ENCODE measurements at regions of chr14 and their contacts with region 1.

Region 1: GRCh38 chr14:21014761-21015190 is 10.1 kb downstream of the NDRG2 start:
- DNase-seq: peak; percentile 85
- H3K4me3 Mint-ChIP-seq: no peak overlapping the region
- H3K27ac Mint-ChIP-seq: no peak overlapping the region
- H3K4me1 Mint-ChIP-seq: no peaks in the 10 kb centered on the region
- H3K27me3 Mint-ChIP-seq: peaks cover 2% of the 10 kb centered on the region

Region 2: DNA sequence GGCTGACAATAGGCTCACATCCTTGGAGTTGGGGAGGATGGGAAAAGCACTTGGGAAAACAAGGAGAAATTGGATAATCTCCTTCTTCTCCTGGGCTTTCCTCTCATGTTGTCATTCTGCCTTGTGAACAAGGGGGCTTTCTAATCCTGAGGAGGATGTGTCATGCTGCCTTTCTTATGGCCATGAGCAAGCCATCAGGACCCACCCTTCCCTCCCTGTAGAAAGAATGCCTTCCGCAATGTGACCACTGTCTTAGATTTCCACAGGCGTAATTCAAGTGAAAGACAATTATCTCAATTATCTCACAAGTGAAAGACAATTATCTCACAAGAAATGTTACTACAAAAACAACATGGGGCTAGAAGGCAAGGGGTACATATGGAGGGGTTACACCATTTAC is 370.3 kb before region 1 on chr14:
- CTCF ChIA-PET with region 1: no interaction called
- POLR2A ChIA-PET with region 1: no interaction called
- intact Hi-C with region 1: no loop called
- DNase-seq: no peak
- H3K4me3 Mint-ChIP-seq: no peak overlapping the region
- H3K27ac Mint-ChIP-seq: no peak overlapping the region
- H3K4me1 Mint-ChIP-seq: no peaks in the 10 kb centered on the region
- H3K27me3 Mint-ChIP-seq: peaks cover 11% of the 10 kb centered on the region

Region 3: DNA sequence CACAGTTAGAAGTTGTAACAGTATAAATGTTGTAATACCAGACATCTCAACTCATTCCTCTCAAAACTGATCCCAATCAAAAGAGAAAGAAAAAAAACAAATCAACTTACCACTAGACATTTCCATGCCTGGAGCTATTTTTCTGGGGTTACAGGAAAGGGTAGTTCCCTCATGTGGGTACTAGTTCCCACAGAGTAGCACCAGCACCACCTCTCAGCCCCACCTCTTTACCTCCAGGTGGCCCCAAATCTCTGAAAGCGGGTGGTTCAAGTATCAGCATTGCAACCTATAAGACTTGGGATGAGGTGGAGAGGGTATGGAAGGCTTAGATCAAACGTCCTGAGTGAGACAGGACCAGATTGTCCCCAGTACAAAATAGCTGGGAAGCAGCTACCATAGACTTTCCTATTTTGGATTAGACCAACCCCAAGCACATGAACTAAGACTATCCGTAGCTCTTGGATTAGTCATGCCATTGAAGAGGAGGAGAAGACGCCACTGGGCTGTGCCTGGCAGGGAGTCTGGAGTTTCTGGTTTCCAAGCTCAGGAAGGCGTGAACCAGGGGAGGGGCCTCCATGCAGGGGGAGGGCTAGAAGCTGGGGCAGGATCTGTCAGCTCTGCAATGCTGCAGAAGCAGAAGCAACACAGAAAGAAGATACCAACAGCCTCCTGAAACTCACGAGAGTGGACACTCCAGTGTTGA is 16.0 kb before region 1 on chr14 and contains the start of gene SLC39A2:
- CTCF ChIA-PET with region 1: interaction called, 70 read pairs
- POLR2A ChIA-PET with region 1: interaction called, 3 read pairs
- intact Hi-C with region 1: no loop called
- DNase-seq: no peak
- H3K4me3 Mint-ChIP-seq: no peak within 1 kb of the TSS
- H3K27ac Mint-ChIP-seq: no peak within 1 kb of the TSS
- H3K4me1 Mint-ChIP-seq: peaks cover 7% of the 10 kb centered on the region
- H3K27me3 Mint-ChIP-seq: no peaks in the 10 kb centered on the region
- total RNA-seq, gene SLC39A2: 0.17 TPM in 1 of 2 experiments, not detected in the other

Region 4: GRCh38 chr14:21029917-21030316 is 15.1 kb after region 1 on chr14 and contains the start of gene TPPP2:
- CTCF ChIA-PET with region 1: interaction called, 55 read pairs
- POLR2A ChIA-PET with region 1: no interaction called
- intact Hi-C with region 1: no loop called
- DNase-seq: no peak
- H3K4me3 Mint-ChIP-seq: no peak within 1 kb of the TSS
- H3K27ac Mint-ChIP-seq: no peak within 1 kb of the TSS
- H3K4me1 Mint-ChIP-seq: no peaks in the 10 kb centered on the region
- H3K27me3 Mint-ChIP-seq: no peaks in the 10 kb centered on the region
- total RNA-seq, gene TPPP2: not detected

Region 5: DNA sequence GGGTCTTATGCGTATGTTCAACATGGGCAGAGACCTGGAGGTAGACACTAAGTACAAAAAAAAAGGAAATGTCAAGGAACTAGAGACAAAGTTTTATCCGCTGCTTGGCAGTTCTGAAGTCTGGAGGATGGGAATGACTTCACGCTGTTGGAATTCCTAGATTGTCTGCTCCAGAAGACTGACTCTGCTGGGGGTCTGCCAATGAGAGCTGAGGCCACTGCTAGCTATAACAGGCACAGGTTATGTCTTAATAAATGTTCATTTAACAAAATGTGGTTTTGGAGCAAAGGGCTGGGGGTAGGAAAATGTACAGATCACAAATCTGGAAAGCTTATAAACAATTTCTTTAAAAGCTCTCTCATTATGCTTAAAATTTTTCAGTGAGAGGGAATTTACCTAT is 48.7 kb after region 1 on chr14:
- CTCF ChIA-PET with region 1: interaction called, 25 read pairs
- POLR2A ChIA-PET with region 1: no interaction called
- intact Hi-C with region 1: no loop called
- DNase-seq: no peak
- H3K4me3 Mint-ChIP-seq: no peak overlapping the region
- H3K27ac Mint-ChIP-seq: no peak overlapping the region
- H3K4me1 Mint-ChIP-seq: peaks cover under 1% of the 10 kb centered on the region
- H3K27me3 Mint-ChIP-seq: peaks cover 33% of the 10 kb centered on the region

Region 6: DNA sequence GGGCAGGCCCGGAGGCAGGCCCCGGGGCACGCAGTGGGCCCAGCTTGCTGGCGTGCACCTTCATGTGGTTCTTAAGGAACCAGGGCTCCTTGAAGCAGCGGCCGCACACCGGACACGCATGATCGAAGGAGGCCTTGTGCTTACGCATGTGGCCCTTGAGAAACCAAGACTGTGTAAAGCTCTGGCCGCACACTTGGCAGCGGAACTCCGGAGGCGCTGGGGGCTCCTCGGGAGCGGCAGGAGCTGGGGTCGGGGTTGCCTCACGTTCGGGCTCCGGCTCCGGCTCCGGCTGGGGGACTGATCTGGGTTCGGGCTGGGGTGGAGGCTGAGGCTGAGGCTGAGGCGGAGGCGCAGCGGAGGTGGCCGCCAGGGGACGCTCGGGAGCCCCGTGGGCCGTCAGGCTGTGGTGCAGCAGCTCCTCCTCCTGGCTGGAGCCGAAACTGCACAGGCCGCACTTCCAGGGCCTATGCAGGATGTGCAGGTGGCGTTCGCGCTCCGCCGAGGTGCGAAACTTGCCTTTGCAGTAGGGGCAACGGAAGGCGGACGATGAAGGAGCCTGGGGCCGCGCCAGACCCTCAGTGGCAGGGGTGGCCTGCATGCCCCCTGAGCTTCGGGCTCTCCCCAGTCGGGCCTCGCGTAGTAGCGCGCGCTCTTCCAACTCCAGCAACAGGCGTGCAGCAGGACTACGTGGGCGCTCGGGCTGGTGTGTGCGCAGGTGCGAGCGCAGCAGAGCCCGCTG is 77.7 kb after region 1 on chr14:
- CTCF ChIA-PET with region 1: interaction called, 278 read pairs
- POLR2A ChIA-PET with region 1: interaction called, 5 read pairs
- intact Hi-C with region 1: loop called (anchors 1 kb)
- DNase-seq: peak; percentile 92
- H3K4me3 Mint-ChIP-seq: no peak overlapping the region
- H3K27ac Mint-ChIP-seq: no peak overlapping the region
- H3K4me1 Mint-ChIP-seq: peaks cover 21% of the 10 kb centered on the region
- H3K27me3 Mint-ChIP-seq: no peaks in the 10 kb centered on the region

Region 7: GRCh38 chr14:21572604-21573003 is 557.8 kb after region 1 on chr14:
- CTCF ChIA-PET with region 1: no interaction called
- POLR2A ChIA-PET with region 1: no interaction called
- intact Hi-C with region 1: no loop called
- DNase-seq: no peak
- H3K4me3 Mint-ChIP-seq: no peak overlapping the region
- H3K27ac Mint-ChIP-seq: no peak overlapping the region
- H3K4me1 Mint-ChIP-seq: no peaks in the 10 kb centered on the region
- H3K27me3 Mint-ChIP-seq: peaks cover 14% of the 10 kb centered on the region